ENCODE measurements at regions of chr16 and their contacts with region 1.

Region 1: GRCh38 chr16:55465077-55465896 is 13.7 kb upstream of the MMP2 start:
- DNase-seq: peak; percentile 81
- H3K4me3 ChIP-seq: peak overlapping the region in 1 of 2 experiments; percentile 56; a peak in 1 of 4 replicates
- H3K27ac ChIP-seq: no peak overlapping the region
- H3K4me1 ChIP-seq: peaks cover 0 to 2% of the 10 kb centered on the region in 2 experiments; a peak in 2 of 4 replicates
- H3K27me3 ChIP-seq: no peaks in the 10 kb centered on the region
- CTCF ChIP-seq: peak; percentile 100
- EP300 ChIP-seq: no peak
- RAD21 ChIP-seq: peak; percentile 100

Region 2: GRCh38 chr16:55328611-55329569 is 136.4 kb before region 1 on chr16:
- CTCF ChIA-PET with region 1: no interaction called
- POLR2A ChIA-PET with region 1: no interaction called
- DNase-seq: no peak
- H3K4me3 ChIP-seq: no peak overlapping the region
- H3K27ac ChIP-seq: no peak overlapping the region
- H3K4me1 ChIP-seq: peaks cover 0 to 10% of the 10 kb centered on the region in 2 experiments; a peak in 1 of 4 replicates
- H3K27me3 ChIP-seq: no peaks in the 10 kb centered on the region
- CTCF ChIP-seq: no peak
- EP300 ChIP-seq: no peak
- RAD21 ChIP-seq: no peak

Region 3: GRCh38 chr16:55480228-55480661 is 15.0 kb after region 1 on chr16:
- CTCF ChIA-PET with region 1: interaction called, 32 read pairs
- POLR2A ChIA-PET with region 1: no interaction called
- DNase-seq: peak; percentile 84
- H3K4me3 ChIP-seq: peak overlapping the region; percentile 88 to 96
- H3K27ac ChIP-seq: peak overlapping the region; percentile 74 to 98
- H3K4me1 ChIP-seq: peaks cover 10 to 35% of the 10 kb centered on the region in 2 experiments
- H3K27me3 ChIP-seq: no peaks in the 10 kb centered on the region
- CTCF ChIP-seq: no peak
- EP300 ChIP-seq: peak in 1 of 2 experiments; percentile 45; a peak in 1 of 4 replicates
- RAD21 ChIP-seq: no peak

Region 4: DNA sequence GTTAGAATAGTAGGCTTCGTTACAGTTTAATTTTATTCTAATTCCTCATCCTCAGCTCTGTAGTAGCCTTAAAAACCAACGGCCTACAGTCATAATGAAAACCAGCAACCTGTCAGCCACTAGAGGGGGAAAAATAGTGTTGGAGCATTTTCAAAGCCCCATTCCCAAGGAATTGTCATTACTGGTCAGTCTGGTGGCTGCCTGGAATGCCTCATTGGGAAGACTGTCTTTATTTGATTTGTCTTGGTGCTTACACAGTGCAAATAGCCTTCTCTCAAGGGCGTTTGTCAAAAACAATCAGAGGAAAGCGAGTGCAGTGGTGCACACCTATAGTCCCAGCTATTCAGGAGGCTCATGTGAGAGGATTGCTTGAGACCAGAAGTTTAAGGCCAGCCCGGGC is 48.3 kb after region 1 on chr16:
- CTCF ChIA-PET with region 1: interaction called, 22 read pairs
- POLR2A ChIA-PET with region 1: no interaction called
- DNase-seq: no peak
- H3K4me3 ChIP-seq: no peak overlapping the region; a peak in 1 of 4 replicates
- H3K27ac ChIP-seq: no peak overlapping the region
- H3K4me1 ChIP-seq: peaks cover 0 to 2% of the 10 kb centered on the region in 2 experiments; a peak in 1 of 4 replicates
- H3K27me3 ChIP-seq: no peaks in the 10 kb centered on the region
- CTCF ChIP-seq: no peak; the same call in 1 of the 2 replicates
- EP300 ChIP-seq: no peak
- RAD21 ChIP-seq: no peak

Region 5: DNA sequence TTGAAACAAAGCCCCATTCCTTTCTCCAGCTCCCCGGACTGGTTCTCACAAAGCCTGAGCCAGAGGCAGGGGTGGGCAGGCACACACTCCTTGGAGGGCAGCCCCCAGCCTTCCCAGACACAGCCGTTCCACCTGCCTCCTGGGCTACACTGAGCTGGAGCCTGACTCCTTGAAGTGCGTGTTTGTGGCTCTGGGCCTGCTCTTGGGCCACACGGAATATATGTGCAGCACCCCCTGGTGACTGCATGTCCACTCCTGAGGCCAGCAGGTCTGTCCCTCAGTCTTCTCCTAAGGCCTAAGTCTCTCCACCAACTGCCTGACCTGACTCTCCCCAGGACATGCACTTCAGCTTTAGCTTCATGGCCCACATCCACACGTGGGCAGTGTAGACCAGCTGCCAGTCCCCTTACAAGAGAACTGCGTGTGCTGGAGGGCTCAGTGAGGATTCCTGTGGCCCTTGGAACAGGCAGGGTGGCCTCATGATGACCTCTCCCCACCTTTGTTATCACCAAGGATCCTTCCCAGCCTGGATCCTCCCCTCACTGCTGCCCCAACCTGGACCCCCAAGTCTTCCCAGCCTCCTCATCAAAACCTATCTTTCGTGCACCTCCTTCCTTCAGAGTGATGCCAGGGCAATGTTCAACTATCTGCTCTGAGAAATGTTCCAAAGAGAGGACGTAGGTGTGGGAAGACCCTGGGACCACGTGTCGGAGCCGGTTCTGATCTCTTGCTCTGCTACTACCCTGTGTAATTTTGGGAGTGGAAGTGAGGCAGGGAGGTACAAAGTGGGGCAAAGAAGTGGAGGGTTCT is 178.1 kb after region 1 on chr16:
- CTCF ChIA-PET with region 1: interaction called, 22 read pairs
- POLR2A ChIA-PET with region 1: no interaction called
- DNase-seq: no peak
- H3K4me3 ChIP-seq: no peak overlapping the region
- H3K27ac ChIP-seq: peak overlapping the region in 1 of 2 experiments; percentile 98; a peak in 2 of 4 replicates
- H3K4me1 ChIP-seq: peaks cover 0 to 46% of the 10 kb centered on the region in 2 experiments; a peak in 2 of 4 replicates
- H3K27me3 ChIP-seq: peaks cover 6% of the 10 kb centered on the region; the same call in 1 of the 2 replicates
- CTCF ChIP-seq: peak; percentile 23; the same call in 1 of the 2 replicates
- EP300 ChIP-seq: no peak
- RAD21 ChIP-seq: peak; percentile 55

Region 6: GRCh38 chr16:55711959-55712876 is 246.9 kb after region 1 on chr16:
- CTCF ChIA-PET with region 1: interaction called, 66 read pairs
- POLR2A ChIA-PET with region 1: no interaction called
- DNase-seq: peak; percentile 61
- H3K4me3 ChIP-seq: no peak overlapping the region; a peak in 1 of 4 replicates
- H3K27ac ChIP-seq: no peak overlapping the region
- H3K4me1 ChIP-seq: peaks cover 0 to 14% of the 10 kb centered on the region in 2 experiments; a peak in 1 of 4 replicates
- H3K27me3 ChIP-seq: no peaks in the 10 kb centered on the region; the same call in 1 of the 2 replicates
- CTCF ChIP-seq: peak; percentile 74
- EP300 ChIP-seq: no peak
- RAD21 ChIP-seq: peak; percentile 77

Region 7: GRCh38 chr16:55868137-55868536 is 402.9 kb after region 1 on chr16:
- CTCF ChIA-PET with region 1: interaction called, 11 read pairs
- POLR2A ChIA-PET with region 1: no interaction called
- DNase-seq: no peak
- H3K4me3 ChIP-seq: no peak overlapping the region
- H3K27ac ChIP-seq: no peak overlapping the region
- H3K4me1 ChIP-seq: no peaks in the 10 kb centered on the region
- H3K27me3 ChIP-seq: no peaks in the 10 kb centered on the region
- CTCF ChIP-seq: no peak
- EP300 ChIP-seq: no peak
- RAD21 ChIP-seq: no peak